ENCODE measurements at regions of chr5 and their contacts with region 1.

Region 1: DNA sequence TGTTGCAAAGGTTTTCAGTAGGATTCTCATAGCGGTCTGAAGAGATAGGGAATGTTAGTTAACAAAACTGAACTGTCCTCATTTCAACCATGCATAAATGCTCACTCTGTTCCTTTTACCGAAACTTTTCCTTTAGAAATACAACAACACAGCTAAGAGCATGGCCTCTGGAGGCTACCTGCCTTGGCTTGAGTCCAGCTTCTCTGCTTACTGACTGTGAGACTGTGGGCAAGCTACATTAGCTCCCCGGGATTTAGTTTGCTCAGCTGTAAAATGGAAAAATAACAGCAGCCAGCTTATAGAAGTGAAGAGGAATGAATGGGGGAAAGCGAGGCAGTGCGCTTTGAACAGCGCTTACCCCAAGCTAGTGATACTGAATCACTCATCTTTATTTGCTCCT is 507.9 kb upstream of the DAP start:
- DNase-seq: no peak
- ATAC-seq: no peak

Region 2: DNA sequence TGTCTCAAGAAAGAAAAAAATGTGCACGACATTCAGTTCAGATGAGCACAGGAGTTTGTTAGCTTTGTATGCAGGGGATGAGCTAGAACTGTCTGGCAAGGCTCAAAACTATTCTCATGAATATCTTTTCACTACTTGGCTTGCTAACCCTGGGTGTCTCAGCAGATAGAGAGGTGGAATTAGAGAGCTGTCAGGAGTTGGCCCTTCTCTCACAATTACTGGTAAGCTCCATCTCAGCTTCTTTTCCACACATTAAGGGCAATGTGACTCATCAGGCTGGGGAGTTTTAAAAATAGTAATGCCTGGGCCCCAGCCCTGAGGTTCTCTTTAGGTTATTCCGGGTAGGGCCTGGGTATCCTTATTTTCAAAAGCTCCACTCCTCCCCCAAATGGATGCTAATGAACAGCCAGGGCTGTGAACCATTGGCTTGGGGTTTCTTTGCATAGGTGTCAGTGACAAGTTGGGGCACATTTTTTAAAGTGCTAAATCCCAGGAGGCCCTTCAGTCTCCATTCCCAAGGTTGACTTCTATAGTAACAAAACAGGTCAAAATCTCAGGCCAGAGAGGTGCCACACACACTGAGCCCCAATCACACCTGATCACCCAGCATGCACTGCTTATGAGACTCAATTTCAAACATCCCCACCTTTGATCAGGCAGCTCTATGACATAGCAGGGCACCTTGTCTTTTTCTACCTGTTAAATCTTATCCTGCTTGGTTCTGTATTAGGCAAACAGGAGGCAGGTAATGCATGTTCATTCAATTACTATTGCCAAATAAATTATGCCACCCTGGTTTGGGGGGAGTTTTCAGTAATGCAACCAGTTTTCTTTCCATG is 268.2 kb before region 1 on chr5:
- intact Hi-C with region 1: no loop called
- DNase-seq: no peak
- ATAC-seq: peak; percentile 87 to 94

Region 3: DNA sequence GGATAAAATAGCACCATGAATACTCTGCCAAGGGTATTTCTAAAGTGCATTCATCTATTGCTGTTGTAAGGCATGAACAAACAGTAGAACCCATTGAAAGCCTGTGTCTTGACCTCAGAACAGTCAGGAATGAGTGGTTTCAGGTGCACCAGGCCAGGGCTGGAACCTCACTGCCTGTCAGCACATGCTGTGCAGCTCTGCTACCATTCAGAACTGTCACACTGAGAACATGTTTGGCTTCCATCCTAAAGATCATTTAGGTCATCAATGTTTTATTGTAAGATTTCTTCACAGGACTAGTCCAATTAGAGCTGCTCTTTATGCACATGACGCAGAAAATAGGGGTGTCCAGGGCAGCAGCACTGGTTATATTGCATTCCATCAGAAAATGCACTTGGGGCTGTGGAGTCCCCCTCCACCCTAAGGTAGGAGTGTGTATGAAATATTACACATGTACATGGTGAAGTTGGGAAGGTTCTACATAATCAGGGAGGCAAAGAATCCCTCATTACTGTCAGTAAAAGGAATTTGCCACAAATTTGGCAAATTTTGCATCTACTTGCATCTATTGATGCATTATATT is 227.3 kb after region 1 on chr5:
- intact Hi-C with region 1: loop called in 1 of 2 experiments (anchors 5 kb)
- DNase-seq: no peak
- ATAC-seq: no peak

Region 4: DNA sequence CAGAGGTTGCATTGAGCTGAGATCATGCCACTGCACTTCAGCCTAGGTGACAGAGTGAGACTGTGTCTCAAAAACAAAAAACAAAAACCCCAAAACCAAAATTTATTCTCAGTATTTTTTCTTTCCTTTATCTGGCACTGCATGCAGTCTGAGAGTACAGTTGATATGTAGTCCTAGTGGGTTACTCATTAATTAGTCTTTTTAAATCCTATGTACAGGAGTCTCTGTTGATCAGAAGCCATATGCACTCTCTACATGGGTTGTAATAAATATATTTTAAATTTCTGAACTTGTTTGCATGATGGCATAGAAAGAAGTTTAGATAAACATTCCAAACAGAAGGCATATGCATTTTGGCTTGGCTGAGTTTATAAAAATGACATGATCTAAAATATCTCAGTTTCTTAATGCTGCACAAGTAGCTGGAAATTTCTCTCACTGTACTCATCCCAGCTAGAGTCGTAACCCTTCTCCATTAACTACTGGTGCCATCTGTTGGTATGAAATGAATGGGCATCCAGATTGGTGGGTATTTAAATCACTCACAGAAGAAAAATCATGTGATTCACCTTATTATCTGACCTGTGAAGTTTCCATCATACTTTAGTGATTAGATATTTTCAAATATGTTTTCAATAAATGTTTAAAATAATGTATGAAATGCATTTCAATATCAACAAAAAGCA is 350.6 kb after region 1 on chr5:
- intact Hi-C with region 1: loop called in 1 of 2 experiments (anchors 5 kb)
- DNase-seq: no peak
- ATAC-seq: peak in 1 of 2 donors; percentile 59

Region 5: DNA sequence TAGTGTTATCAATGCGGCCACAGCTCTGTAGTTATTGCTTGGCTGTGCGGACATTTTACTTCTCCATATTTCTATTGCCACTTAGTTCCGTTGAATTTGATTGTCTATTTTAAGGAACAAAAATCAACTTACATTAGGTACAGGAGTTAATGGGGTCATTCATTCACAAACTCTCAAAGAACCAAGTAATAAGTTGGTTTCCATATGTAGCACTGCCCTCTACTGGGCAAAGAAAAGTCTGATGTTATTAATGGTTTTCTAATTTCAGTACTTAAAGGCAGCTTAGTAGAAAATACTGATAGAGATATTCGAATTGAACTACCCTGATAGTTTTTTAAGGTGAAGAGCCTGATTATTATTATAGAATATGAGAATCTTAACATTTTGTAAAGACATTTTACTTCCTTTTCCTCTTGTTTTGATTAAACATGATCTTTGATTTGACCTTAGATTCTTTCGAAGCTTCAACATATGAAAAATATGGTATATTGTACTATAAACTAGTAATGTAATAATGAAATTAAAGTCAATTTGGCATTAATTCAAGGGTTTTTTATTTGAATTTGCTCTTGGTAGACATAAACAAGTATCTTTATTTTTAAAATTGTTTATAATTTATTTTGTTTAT is 754.8 kb after region 1 on chr5:
- intact Hi-C with region 1: loop called in 1 of 2 experiments (anchors 5 kb)
- DNase-seq: no peak
- ATAC-seq: no peak

Measured in left cardiac atrium (tissue), 4 donors.